ENCODE measurements at regions of chr15 and their contacts with region 1.

Region 1: GRCh38 chr15:60916679-60917460 is 312.2 kb downstream of the RORA start:
- DNase-seq: peak; percentile 70 to 95 (median 88)
- ATAC-seq: peak; percentile 99
- H3K4me3 ChIP-seq: no peak overlapping the region
- H3K4me3 Mint-ChIP-seq: no peak overlapping the region
- H3K27ac ChIP-seq: peak overlapping the region in 1 of 2 experiments; percentile 31
- H3K27ac Mint-ChIP-seq: peak overlapping the region; percentile 72
- H3K4me1 ChIP-seq: peaks cover 8% of the 10 kb centered on the region
- H3K4me1 Mint-ChIP-seq: peaks cover 11% of the 10 kb centered on the region
- H3K27me3 ChIP-seq: no peaks in the 10 kb centered on the region
- H3K27me3 Mint-ChIP-seq: no peaks in the 10 kb centered on the region
- CTCF ChIP-seq: peak; percentile 92

Region 2: DNA sequence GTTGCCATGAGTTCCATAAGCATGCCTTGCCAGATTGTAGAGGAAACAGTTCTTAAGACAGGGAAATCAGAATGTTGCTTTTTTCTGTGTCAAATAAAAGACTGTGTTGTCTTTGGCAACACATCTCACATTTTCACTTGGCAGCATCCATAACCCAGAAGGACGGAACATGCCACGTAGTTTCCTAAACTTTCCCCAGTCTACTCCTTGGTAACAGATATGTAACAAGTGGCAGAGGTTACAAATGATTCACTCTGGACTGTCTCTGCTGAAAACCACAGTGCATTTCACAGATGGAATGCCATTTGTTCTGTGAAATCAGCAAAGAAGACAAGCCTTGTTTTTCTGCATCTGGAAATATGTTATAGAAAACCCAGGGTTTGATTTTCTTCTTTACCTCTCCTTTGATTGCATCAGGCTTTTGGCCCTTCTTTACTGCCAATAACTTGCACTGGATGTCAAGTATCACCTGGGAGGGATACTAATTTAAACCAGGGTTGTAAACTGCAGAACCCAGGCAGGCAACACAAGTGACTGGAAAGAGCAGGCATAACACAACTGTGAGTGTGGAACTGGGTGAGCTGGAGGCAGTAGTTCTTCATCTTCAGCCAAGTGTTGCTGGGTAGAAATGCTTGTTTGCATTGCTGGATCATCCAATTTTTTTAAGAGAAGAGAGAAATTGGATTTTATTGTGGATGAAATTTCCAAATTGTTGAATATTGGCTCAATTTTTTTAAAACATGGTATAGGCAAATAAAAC is 1037.2 kb before region 1 on chr15:
- CTCF ChIA-PET with region 1: no interaction called
- POLR2A ChIA-PET with region 1: no interaction called
- intact Hi-C with region 1: no loop called
- DNase-seq: no peak
- ATAC-seq: no peak
- H3K4me3 ChIP-seq: no peak overlapping the region
- H3K4me3 Mint-ChIP-seq: no peak overlapping the region
- H3K27ac ChIP-seq: no peak overlapping the region
- H3K27ac Mint-ChIP-seq: no peak overlapping the region
- H3K4me1 ChIP-seq: no peaks in the 10 kb centered on the region
- H3K4me1 Mint-ChIP-seq: no peaks in the 10 kb centered on the region
- H3K27me3 ChIP-seq: peaks cover 0 to 2% of the 10 kb centered on the region in 2 experiments
- H3K27me3 Mint-ChIP-seq: peaks cover 9% of the 10 kb centered on the region
- CTCF ChIP-seq: no peak

Region 3: GRCh38 chr15:60362321-60363086 is 554.4 kb before region 1 on chr15:
- CTCF ChIA-PET with region 1: interaction called, 21 read pairs
- POLR2A ChIA-PET with region 1: no interaction called
- intact Hi-C with region 1: loop called (anchors 1 to 2 kb)
- DNase-seq: peak in 1 of 9 experiments; percentile 7
- ATAC-seq: peak; percentile 61
- H3K4me3 ChIP-seq: no peak overlapping the region
- H3K4me3 Mint-ChIP-seq: no peak overlapping the region
- H3K27ac ChIP-seq: peak overlapping the region in 1 of 2 experiments; percentile 16
- H3K27ac Mint-ChIP-seq: no peak overlapping the region
- H3K4me1 ChIP-seq: no peaks in the 10 kb centered on the region
- H3K4me1 Mint-ChIP-seq: peaks cover 5% of the 10 kb centered on the region
- H3K27me3 ChIP-seq: no peaks in the 10 kb centered on the region
- H3K27me3 Mint-ChIP-seq: no peaks in the 10 kb centered on the region
- CTCF ChIP-seq: no peak

Region 4: DNA sequence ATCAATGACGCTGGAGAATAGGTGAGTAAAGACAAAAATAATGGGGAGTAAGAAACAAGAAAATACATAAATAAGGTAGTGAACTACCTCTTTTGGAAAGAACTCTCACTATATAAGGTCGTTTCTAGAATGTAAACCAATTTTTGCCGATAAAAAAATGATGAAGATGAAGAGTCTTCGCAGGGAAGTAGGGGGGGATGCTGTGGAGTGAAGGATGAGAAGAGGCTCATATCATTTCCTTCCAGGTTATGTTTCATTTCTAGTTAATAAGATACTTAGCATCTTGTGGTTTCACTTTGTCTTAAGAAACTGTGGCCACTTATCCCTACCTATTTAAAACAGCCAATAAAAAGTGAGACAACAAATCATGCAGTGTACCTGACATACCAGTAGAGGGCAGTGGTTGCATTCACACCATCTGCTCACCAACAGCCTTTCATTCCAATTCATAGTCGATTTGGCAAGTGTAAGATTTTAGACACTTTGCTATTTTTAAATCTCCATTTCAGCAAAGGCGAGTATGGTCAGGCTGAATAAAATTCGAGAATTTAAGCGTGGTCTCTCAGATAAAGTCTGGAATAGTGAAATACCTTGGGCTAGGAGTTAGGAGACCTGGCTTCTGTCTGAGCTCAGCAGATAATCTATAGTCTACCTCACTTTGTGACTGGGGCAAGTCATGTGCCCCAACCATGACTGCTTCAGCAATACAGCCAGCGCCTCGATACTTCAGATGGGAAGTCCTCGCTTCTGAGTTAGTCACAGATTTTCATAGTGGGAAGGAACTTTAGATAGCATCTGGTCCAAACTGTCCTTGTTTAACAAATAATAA is 409.1 kb before region 1 on chr15:
- CTCF ChIA-PET with region 1: interaction called, 24 read pairs
- POLR2A ChIA-PET with region 1: no interaction called
- intact Hi-C with region 1: loop called (anchors 1 kb)
- DNase-seq: peak in 8 of 9 experiments; percentile 18 to 89 (median 52)
- ATAC-seq: peak; percentile 83
- H3K4me3 ChIP-seq: no peak overlapping the region
- H3K4me3 Mint-ChIP-seq: no peak overlapping the region
- H3K27ac ChIP-seq: peak overlapping the region in 1 of 2 experiments; percentile 52
- H3K27ac Mint-ChIP-seq: peak overlapping the region; percentile 47
- H3K4me1 ChIP-seq: peaks cover 33% of the 10 kb centered on the region
- H3K4me1 Mint-ChIP-seq: peaks cover 52% of the 10 kb centered on the region
- H3K27me3 ChIP-seq: no peaks in the 10 kb centered on the region
- H3K27me3 Mint-ChIP-seq: no peaks in the 10 kb centered on the region
- CTCF ChIP-seq: peak; percentile 86

Region 5: DNA sequence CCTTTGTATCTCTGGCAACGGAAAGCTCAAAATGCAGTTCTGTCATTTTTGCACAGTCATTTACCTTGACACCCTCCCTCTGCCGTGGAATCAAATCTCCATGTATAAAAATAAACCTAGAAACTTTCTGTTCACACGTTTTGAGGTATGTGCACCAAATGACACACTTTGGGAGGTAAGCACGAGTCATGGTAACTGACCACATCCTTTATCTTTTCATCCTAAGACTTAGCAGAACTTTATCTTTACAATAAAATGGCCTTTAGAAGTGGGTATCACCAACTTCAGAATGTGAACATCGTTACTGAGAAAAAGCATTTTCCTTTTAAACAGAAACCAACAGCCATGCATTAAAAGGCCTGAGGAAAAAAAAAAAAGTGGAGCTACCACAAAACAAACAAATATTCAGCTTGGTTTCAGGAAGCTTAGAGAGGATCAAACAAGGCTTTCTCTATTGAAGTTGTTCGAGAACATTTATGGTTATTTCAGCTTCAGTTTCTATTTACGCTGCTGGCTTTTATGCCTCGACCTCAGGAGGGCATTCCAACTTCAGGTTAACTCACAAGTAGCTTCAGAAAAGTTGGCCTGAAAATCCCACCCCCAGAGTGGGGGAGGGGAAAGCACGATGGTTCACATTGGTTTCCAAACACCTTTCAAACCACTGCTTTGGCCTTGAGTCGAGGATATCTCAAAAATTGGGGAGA is 266.9 kb before region 1 on chr15:
- CTCF ChIA-PET with region 1: interaction called, 14 read pairs
- POLR2A ChIA-PET with region 1: no interaction called
- intact Hi-C with region 1: loop called in 1 of 2 experiments (anchors 5 kb)
- DNase-seq: peak in 4 of 9 experiments; percentile 19 to 89 (median 57)
- ATAC-seq: peak; percentile 85
- H3K4me3 ChIP-seq: peak overlapping the region; percentile 5 to 23
- H3K4me3 Mint-ChIP-seq: peak overlapping the region; percentile 75
- H3K27ac ChIP-seq: peak overlapping the region; percentile 37 to 71
- H3K27ac Mint-ChIP-seq: peak overlapping the region; percentile 79
- H3K4me1 ChIP-seq: peaks cover 26% of the 10 kb centered on the region
- H3K4me1 Mint-ChIP-seq: peaks cover 36% of the 10 kb centered on the region
- H3K27me3 ChIP-seq: no peaks in the 10 kb centered on the region
- H3K27me3 Mint-ChIP-seq: no peaks in the 10 kb centered on the region
- CTCF ChIP-seq: no peak

Region 6: GRCh38 chr15:60905587-60905986 is 11.3 kb before region 1 on chr15:
- CTCF ChIA-PET with region 1: interaction called, 40 read pairs
- POLR2A ChIA-PET with region 1: interaction called, 12 read pairs
- intact Hi-C with region 1: no loop called
- DNase-seq: peak in 8 of 9 experiments; percentile 2 to 61 (median 34)
- ATAC-seq: peak; percentile 52
- H3K4me3 ChIP-seq: no peak overlapping the region
- H3K4me3 Mint-ChIP-seq: no peak overlapping the region
- H3K27ac ChIP-seq: no peak overlapping the region
- H3K27ac Mint-ChIP-seq: no peak overlapping the region
- H3K4me1 ChIP-seq: peaks cover 32% of the 10 kb centered on the region
- H3K4me1 Mint-ChIP-seq: peaks cover 31% of the 10 kb centered on the region
- H3K27me3 ChIP-seq: no peaks in the 10 kb centered on the region
- H3K27me3 Mint-ChIP-seq: no peaks in the 10 kb centered on the region
- CTCF ChIP-seq: no peak